Endothelial cell of umbilical vein (primary cell): ENCODE measurements at regions of chr10 and their contacts with region 1.

Region 1: DNA sequence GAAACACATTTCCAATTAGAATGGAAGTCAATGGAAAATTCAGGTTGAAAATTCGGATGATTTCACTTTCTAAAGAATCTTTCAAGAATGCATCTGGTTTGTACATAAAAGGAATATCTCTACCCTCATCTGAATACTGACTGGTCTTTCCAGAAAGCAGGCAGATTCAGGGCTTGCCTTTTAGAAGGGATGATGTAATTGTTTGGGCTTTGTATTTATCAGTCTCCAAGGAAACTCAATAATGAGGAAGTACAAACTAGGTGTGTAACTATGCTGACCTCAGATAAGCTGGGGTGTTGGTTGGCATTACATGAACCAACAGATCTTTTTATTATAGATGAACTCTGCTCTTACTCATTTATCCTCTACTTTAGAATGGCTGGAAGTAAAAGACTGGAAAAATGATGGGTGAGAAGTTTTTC is 24.1 kb downstream of the PDLIM1 start:
- DNase-seq: peak; percentile 91
- H3K4me3 ChIP-seq: no peak overlapping the region
- H3K27ac ChIP-seq: peak overlapping the region; percentile 74
- H3K4me1 ChIP-seq: peaks cover 30% of the 10 kb centered on the region
- H3K27me3 ChIP-seq: no peaks in the 10 kb centered on the region
- CTCF ChIP-seq: no peak
- POLR2A ChIP-seq: no peak

Region 2: DNA sequence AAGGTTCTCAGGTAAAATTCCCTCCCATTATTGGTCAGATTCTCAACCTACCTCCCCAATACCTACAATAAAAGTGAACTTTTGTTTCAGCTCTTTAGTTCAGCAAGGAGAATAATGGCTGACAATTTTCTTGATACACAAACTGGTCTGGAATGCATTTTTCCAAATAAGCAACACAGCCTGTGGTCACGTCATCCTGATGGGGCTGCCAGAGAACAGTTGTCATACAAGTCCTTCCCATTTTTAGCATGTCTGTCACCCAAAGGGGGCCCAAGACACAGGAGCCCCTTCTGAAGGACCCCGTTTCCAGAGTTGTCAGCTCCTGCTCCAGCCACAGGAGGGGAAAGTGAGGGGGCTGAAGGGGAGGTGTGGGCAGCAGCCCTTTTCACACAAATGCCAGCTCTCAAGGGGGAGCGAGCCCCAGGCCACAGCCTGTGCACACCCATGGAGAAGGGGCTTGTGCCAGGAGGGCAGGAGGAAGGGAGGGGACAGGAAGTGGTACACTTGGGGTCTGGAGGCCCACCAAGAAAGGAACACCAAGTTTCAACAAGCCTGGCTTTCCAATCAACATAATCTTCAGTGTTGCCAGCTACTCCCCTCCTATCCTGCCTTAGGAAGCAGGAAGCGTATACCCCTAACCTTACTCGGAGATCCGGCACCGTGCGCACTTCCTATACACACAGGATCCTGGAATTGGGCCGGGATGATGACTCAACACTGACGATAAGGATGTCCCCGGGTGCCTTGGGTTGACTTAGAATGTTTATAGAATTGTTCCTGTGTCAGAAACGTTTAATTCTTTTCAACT is 67.5 kb after region 1 on chr10:
- CTCF ChIA-PET with region 1: interaction called, 3 read pairs
- POLR2A ChIA-PET with region 1: no interaction called
- dilution Hi-C with region 1: no loop called
- intact Hi-C with region 1: loop called (anchors 1 kb)
- DNase-seq: peak; percentile 89
- H3K4me3 ChIP-seq: no peak overlapping the region
- H3K27ac ChIP-seq: peak overlapping the region; percentile 96
- H3K4me1 ChIP-seq: peaks cover 30% of the 10 kb centered on the region
- H3K27me3 ChIP-seq: no peaks in the 10 kb centered on the region
- CTCF ChIP-seq: no peak
- POLR2A ChIP-seq: peak; percentile 57